ENCODE measurements at regions of chr13 and their contacts with region 1.

Region 1: GRCh38 chr13:77492982-77493381 is 42.5 kb upstream of the SCEL start:
- DNase-seq: peak; percentile 16
- ATAC-seq: no peak
- H3K4me3 Mint-ChIP-seq: no peak overlapping the region
- H3K27ac Mint-ChIP-seq: no peak overlapping the region
- H3K4me1 Mint-ChIP-seq: no peaks in the 10 kb centered on the region
- H3K27me3 Mint-ChIP-seq: no peaks in the 10 kb centered on the region

Region 2: GRCh38 chr13:77565635-77566034 is 72.7 kb after region 1 on chr13:
- CTCF ChIA-PET with region 1: interaction called, 12 read pairs
- POLR2A ChIA-PET with region 1: no interaction called
- intact Hi-C with region 1: loop called (anchors 1 kb)
- DNase-seq: no peak
- ATAC-seq: peak; percentile 60
- H3K4me3 Mint-ChIP-seq: no peak overlapping the region
- H3K27ac Mint-ChIP-seq: no peak overlapping the region
- H3K4me1 Mint-ChIP-seq: no peaks in the 10 kb centered on the region
- H3K27me3 Mint-ChIP-seq: peaks cover 1% of the 10 kb centered on the region

Region 3: GRCh38 chr13:77751513-77752456 is 258.8 kb after region 1 on chr13:
- CTCF ChIA-PET with region 1: no interaction called
- POLR2A ChIA-PET with region 1: no interaction called
- intact Hi-C with region 1: loop called (anchors 5 to 10 kb)
- DNase-seq: peak; percentile 60
- ATAC-seq: peak; percentile 90
- H3K4me3 Mint-ChIP-seq: no peak overlapping the region
- H3K27ac Mint-ChIP-seq: peak overlapping the region; percentile 28
- H3K4me1 Mint-ChIP-seq: peaks cover 18% of the 10 kb centered on the region
- H3K27me3 Mint-ChIP-seq: no peaks in the 10 kb centered on the region

Measured in activated CD4-positive, alpha-beta T cell treated with anti-CD3 and anti-CD28 coated beads for 36 hours (primary cell).